ENCODE measurements at regions of chr2 and their contacts with region 1.

Region 1: GRCh38 chr2:46561731-46562450 is 82.5 kb downstream of the TMEM247 start:
- DNase-seq: no peak
- CTCF ChIP-seq: no peak

Region 2: DNA sequence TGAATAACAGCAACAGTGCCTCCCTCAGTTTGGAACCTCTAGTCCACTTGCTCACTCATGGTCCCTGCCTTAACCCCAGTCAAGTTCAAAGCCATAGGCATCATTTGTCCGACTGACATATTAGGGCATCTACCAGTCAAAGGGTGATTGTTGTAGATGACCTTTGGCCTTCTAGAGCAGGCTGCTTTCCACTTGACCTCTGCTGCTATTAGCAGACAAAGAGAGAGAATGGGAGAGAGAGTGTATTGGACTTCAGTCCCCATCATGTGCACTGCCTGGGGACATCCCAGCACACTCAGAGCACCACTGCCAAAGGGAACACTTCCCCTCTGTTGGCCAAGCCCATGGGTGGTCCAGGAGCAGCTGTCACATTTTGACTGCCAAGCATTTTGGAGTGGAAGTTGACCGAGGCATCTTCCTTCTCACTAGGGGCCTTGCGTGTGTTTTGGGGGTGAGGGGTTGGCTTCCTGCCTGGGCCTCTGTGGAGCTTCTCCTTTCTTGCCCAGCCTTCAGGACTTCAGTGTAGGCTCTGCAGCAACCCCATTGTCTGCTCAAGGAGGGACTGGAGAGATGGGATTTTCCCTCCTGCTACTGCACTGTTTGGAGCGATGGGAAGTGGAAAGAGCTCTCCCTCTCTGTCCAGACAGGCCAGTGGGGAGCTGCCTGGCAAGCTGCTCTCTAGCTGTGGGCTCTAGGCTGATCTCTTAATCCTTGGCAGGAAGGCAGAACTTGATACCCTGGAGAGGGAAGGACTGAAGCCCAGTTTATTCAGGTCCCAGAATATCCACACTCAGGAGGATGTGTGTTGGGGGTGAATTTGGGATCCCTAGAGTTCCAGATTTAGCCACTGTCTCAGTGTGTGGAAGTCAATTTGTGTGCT is 14.4 kb before region 1 on chr2:
- CTCF ChIA-PET with region 1: interaction called, 16 read pairs
- POLR2A ChIA-PET with region 1: interaction called, 8 read pairs
- DNase-seq: no peak
- CTCF ChIP-seq: no peak